H1 (cell line): ENCODE measurements at regions of chr3 and their contacts with region 1.

Region 1: DNA sequence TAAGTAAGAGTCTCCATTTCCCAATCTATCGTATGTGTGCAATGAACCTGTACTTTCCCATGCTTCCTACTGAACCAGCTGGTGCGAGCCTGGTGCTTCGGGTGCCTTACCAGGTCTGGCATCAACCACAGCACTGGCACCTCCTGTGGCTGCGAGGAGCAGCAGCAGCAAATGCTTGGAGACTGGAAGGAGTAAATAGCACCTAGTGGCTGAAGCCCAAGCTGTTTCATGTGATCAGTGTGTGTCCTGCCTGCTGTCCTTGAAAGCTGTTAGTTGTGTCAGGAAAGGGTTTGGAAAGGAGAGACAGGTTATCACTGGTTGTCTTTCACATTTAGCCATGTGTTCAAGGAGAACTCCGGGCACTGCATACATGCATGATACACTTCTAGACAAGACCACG is 31.8 kb downstream of the PCOLCE2 start:
- DNase-seq: no peak
- H3K4me3 ChIP-seq: no peak overlapping the region
- H3K27ac ChIP-seq: no peak overlapping the region
- H3K4me1 ChIP-seq: peaks cover 8 to 27% (median 20%) of the 10 kb centered on the region in 4 experiments
- H3K27me3 ChIP-seq: no peaks in the 10 kb centered on the region
- CTCF ChIP-seq: peak; percentile 74 to 97 (median 84)
- EP300 ChIP-seq: no peak
- POLR2A ChIP-seq: no peak
- RAD21 ChIP-seq: peak; percentile 44 to 57

Region 2: GRCh38 chr3:142844339-142844977 is 12.6 kb before region 1 on chr3:
- CTCF ChIA-PET with region 1: interaction called, 21 read pairs
- POLR2A ChIA-PET with region 1: interaction called, 3 read pairs
- DNase-seq: no peak
- H3K4me3 ChIP-seq: no peak overlapping the region
- H3K27ac ChIP-seq: no peak overlapping the region
- H3K4me1 ChIP-seq: no peaks in the 10 kb centered on the region
- H3K27me3 ChIP-seq: no peaks in the 10 kb centered on the region
- CTCF ChIP-seq: peak in 2 of 3 experiments; percentile 42 to 59; a peak in 2 of 4 replicates
- EP300 ChIP-seq: no peak
- POLR2A ChIP-seq: no peak
- RAD21 ChIP-seq: peak; percentile 44 to 59

Region 3: DNA sequence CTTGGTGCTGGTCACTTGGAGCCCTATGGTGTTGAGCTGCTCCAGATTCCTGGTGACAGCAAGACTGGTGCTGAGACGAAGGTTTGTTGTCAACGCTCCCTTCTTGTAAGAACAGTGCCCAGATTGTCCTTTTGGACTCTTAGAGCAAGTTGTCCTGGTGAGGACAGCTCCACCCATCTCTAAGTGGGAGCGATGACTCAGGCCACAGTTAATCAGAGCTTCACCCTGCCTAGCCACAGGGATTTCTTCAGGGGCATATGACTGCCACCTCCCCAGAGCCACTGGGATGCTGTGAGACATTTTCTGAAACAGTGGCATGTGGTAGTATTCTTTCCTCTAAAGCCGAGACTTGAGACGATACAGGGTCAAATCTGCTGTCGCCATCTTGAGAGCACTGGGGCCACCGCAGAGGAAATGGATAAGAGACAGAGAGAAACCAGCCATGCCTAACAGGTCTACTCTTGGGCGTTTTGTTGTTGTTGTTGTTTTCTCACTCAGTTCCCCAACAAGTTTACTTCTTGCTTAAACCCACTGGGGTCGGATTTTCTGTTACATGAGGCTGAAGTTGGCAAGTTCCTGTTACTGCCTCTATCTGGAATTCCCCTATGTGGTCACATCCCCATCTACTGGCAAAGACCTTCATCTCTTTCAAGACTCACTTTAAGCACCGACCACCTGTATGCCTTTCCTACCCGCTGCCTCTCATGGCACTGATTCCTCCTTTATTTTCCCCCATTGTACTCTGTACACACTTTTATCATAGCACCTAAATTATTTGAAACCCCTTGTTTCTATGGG is 47.8 kb after region 1 on chr3:
- CTCF ChIA-PET with region 1: interaction called, 16 read pairs
- POLR2A ChIA-PET with region 1: no interaction called
- DNase-seq: peak in 1 of 2 experiments; percentile 50
- H3K4me3 ChIP-seq: no peak overlapping the region
- H3K27ac ChIP-seq: no peak overlapping the region
- H3K4me1 ChIP-seq: no peaks in the 10 kb centered on the region
- H3K27me3 ChIP-seq: no peaks in the 10 kb centered on the region
- CTCF ChIP-seq: peak in 2 of 3 experiments; percentile 73 to 75; a peak in 3 of 4 replicates
- EP300 ChIP-seq: no peak
- POLR2A ChIP-seq: no peak
- RAD21 ChIP-seq: peak; percentile 92